HEK293 (cell line): ENCODE measurements at regions of chr11 and their contacts with region 1.

Region 1: DNA sequence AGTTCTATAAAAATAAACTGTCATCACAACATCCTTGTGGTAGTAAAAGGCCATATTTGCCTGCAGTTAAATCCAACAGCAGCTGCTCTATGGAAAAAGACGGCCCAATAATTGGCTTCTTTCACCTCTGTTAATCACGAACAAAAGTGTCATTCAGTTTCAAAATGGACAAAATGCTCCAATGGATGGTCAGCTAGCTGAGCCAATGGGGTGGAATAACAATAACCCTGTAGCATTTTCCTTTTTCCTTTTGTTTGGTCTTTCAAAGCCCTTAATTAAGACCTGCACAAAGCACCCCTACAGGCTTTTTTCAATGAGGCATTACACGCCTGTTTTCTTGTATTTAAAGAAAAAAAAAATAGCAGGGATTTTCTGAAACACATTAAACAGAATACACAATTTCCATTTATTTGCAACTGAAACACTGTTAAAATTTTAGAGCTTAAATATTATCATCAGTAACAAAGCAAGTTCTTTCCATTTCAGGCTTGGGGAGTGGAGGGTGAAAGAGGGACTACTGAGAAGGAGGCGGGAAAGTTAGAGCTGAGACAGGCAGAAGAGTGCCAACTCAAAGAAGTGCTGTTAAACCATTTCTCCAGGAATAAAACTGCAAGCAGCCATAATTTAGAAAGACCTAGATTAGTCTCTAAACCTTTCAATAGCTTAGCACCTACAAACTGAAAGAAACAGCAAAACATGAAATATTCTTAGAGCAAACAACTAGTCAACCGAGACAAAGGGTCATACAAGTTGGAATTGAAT is 28.7 kb downstream of the LGR4 start:
- H3K4me3 ChIP-seq: no peak overlapping the region
- H3K27ac ChIP-seq: no peak overlapping the region
- H3K4me1 ChIP-seq: peaks cover 8% of the 10 kb centered on the region
- CTCF ChIP-seq: no peak

Region 2: DNA sequence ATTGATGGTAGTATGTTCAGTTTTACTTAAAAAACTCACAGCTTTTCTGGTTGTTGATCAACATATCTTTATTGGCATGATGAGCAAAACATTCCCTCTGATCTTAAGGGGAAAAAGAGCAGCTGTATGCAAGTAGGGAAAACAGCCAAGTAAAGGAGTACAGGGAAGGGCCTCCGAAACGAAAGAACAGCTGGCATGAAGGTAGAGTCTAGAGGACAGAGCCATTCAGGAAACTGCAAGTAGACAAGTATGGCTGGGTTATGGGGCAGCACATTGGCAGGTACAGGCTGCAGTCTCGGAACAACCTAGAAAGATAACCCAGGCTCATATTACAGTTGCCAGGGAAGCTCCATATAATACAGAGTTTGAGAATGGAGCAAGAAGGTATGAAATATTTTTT is 16.7 kb before region 1 on chr11:
- CTCF ChIA-PET with region 1: interaction called, 10 read pairs
- POLR2A ChIA-PET with region 1: no interaction called
- H3K4me3 ChIP-seq: no peak overlapping the region
- H3K27ac ChIP-seq: no peak overlapping the region
- H3K4me1 ChIP-seq: peaks cover 13% of the 10 kb centered on the region
- CTCF ChIP-seq: no peak